PC-3 (cell line): ENCODE measurements at regions of chr3 and their contacts with region 1.

Region 1: GRCh38 chr3:196684548-196685407 is 27.3 kb downstream of the CEP19 start:
- DNase-seq: peak; percentile 80
- ATAC-seq: peak; percentile 88
- H3K4me3 ChIP-seq: 0 out of 2 replicates have a peak overlapping the region, but pooled peaks have one; percentile 21
- H3K27ac ChIP-seq: no peak overlapping the region
- H3K4me1 ChIP-seq: no peaks in the 10 kb centered on the region
- H3K27me3 ChIP-seq: 0 out of 2 replicates have a peak, but pooled peaks cover 3% of the 10 kb centered on the region
- CTCF ChIP-seq: peak; percentile 88

Region 2: GRCh38 chr3:196537319-196537984 is 147.3 kb before region 1 on chr3:
- CTCF ChIA-PET with region 1: no interaction called
- POLR2A ChIA-PET with region 1: no interaction called
- intact Hi-C with region 1: loop called (anchors 5 kb)
- DNase-seq: peak; percentile 64
- ATAC-seq: peak; percentile 50
- H3K4me3 ChIP-seq: no peak overlapping the region
- H3K27ac ChIP-seq: no peak overlapping the region
- H3K4me1 ChIP-seq: no peaks in the 10 kb centered on the region
- H3K27me3 ChIP-seq: no peaks in the 10 kb centered on the region
- CTCF ChIP-seq: peak; percentile 84